ENCODE measurements at regions of chr1 and their contacts with region 1.

Region 1: DNA sequence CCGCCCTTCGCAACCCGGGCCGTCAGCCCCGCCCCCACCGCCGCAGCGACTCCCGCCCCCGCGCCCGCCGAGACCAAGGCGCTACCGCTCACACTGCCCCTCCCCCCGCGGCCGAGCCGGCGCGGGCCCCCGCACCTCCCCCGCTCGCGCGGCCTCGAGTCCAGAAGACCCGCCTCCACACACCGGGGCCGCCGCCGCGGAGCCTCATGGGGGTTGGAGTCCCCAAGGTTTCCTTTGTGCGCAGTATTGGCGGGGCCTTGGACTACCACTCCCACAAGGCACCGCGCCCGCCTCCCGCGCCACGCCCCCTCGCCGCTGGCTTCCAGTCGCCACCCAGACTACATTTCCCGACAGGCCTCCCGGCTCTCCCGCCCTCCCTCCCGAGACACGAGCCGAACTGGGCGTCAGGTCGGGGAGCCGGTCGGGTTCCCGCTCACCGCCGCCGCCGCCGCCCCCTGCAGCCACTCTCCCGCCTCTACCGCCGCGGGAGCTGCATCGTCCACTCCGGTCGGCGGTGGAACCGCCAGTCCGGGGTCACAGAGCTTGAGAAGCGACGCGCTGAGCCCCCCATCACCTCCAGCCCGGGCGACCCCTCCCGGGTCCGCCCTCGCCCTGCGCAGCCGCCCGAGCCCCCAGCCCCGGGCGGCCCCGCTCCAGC is at the start of gene PHF13:
- DNase-seq: peak; percentile 98 to 99 (median 99)
- H3K4me3 ChIP-seq: peak within 1 kb of the TSS; percentile 20 to 46
- H3K4me3 Mint-ChIP-seq: peak within 1 kb of the TSS; percentile 91 to 97 (median 93)
- H3K27ac ChIP-seq: peak within 1 kb of the TSS; percentile 65
- H3K27ac Mint-ChIP-seq: peak within 1 kb of the TSS; percentile 86 to 94 (median 92)
- H3K4me1 ChIP-seq: peaks cover 23% of the 10 kb centered on the region
- H3K4me1 Mint-ChIP-seq: peaks cover 15 to 31% (median 25%) of the 10 kb centered on the region in 4 donors
- H3K27me3 ChIP-seq: no peaks in the 10 kb centered on the region
- H3K27me3 Mint-ChIP-seq: no peaks in the 10 kb centered on the region
- total RNA-seq, gene PHF13: 13.1 to 14.7 TPM

Region 2: DNA sequence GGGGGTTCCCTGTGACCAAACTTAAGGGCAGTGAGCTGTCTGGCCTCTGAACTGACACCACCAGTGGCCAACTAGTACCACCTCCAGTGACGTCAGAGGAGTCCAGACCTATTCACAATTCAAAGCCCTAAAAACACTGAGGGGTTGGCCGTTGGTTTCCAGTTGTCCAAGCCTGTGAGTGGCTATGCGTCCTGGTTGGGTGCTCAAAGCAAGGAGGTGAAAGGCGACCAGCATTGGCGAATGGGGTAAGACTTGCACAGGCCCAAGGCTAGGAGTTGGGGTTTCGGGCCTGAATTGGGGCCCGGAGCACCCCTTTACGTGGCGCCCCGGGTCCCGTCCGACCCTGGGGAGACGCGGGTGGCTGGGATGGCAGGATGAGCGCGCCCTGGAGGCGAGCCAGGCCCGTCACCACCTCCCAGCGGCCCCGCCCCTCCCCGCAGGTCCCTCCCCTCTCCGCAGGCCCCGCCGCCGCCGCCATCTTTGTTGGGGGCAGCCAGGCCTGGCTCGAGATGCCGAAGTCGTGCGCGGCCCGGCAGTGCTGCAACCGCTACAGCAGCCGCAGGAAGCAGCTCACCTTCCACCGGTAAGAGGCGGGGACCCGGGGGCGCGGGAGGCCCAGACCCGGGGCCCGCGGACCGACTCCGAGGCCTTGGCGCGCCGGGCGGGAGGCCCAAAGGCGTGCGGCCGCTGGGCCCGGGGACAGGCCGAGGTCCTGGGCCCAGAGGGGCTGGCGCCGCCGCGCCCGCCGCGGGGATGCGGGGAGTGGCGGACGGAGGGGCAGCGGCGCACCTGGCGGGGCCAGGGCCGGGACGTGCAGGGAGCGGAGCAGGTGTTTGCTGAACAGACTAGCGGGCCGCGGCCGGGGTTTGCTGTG is 11.5 kb after region 1 on chr1 and contains the start of gene THAP3:
- CTCF ChIA-PET with region 1: interaction called, 5 read pairs
- POLR2A ChIA-PET with region 1: interaction called, 5 read pairs
- intact Hi-C with region 1: loop called (anchors 1 kb)
- DNase-seq: peak; percentile 84 to 91 (median 86)
- H3K4me3 ChIP-seq: peak within 1 kb of the TSS; percentile 63 to 73
- H3K4me3 Mint-ChIP-seq: peak within 1 kb of the TSS; percentile 90 to 95 (median 94)
- H3K27ac ChIP-seq: peak within 1 kb of the TSS; percentile 60
- H3K27ac Mint-ChIP-seq: peak within 1 kb of the TSS; percentile 78 to 93 (median 90)
- H3K4me1 ChIP-seq: peaks cover 23% of the 10 kb centered on the region
- H3K4me1 Mint-ChIP-seq: peaks cover 15 to 35% (median 28%) of the 10 kb centered on the region in 4 donors
- H3K27me3 ChIP-seq: no peaks in the 10 kb centered on the region
- H3K27me3 Mint-ChIP-seq: no peaks in the 10 kb centered on the region
- total RNA-seq, gene THAP3: 29.5 to 34.5 TPM

Region 3: GRCh38 chr1:6686294-6686693 is 72.8 kb after region 1 on chr1:
- CTCF ChIA-PET with region 1: no interaction called
- POLR2A ChIA-PET with region 1: no interaction called
- intact Hi-C with region 1: no loop called
- DNase-seq: no peak
- H3K4me3 ChIP-seq: no peak overlapping the region
- H3K4me3 Mint-ChIP-seq: no peak overlapping the region
- H3K27ac ChIP-seq: no peak overlapping the region
- H3K27ac Mint-ChIP-seq: peak overlapping the region in 1 of 7 donors; percentile 8
- H3K4me1 ChIP-seq: no peaks in the 10 kb centered on the region
- H3K4me1 Mint-ChIP-seq: peaks cover 4 to 16% (median 14%) of the 10 kb centered on the region in 4 donors
- H3K27me3 ChIP-seq: no peaks in the 10 kb centered on the region
- H3K27me3 Mint-ChIP-seq: no peaks in the 10 kb centered on the region

Measured in CD4-positive, alpha-beta memory T cell (primary cell).